ENCODE measurements at regions of chr17 and their contacts with region 1.

Region 1: DNA sequence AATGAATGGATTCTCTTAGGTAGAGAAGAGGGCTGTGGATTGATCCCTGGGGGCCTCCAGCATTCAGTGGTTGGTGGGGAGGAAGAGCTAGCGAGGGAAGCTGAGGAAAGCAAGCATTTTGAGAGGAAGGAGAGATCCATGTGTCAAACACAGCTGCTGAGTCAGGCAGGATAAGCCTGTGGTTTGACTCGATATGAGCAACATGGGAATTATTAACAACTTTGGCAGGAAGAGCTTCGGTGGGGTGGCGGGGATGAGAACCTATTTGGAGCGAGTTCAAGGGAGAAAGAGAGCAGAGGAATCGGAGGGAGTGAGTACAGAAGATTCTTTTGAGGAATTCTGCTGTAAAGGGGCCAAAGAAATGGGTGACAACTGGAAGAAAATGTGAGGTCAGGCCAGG is 59.5 kb upstream of the CDC42EP4 start:
- DNase-seq: no peak
- H3K4me3 ChIP-seq: no peak overlapping the region
- H3K27ac ChIP-seq: no peak overlapping the region
- H3K4me1 ChIP-seq: peaks cover 7% of the 10 kb centered on the region
- H3K27me3 ChIP-seq: no peaks in the 10 kb centered on the region
- CTCF ChIP-seq: no peak
- EP300 ChIP-seq: no peak
- POLR2A ChIP-seq: no peak

Region 2: DNA sequence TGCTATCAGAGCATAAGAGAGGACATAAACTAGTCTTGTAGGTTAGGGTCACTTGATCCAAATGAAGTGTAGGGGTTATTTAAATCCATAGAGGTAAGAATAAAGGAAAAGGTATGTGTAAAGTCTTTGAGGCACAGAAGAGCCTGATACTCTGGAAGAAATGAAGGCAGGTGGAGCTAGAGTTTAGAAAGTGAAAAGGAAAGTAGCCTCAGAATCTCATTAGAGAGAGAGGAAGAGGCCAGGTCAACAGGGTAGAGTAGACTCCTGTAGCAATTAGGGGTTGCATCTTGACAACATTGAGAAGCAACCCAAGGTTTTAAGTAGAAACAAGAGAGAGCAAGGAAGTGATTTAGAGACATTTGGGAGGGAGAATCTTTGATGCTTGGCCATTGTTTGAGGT is 1485.6 kb before region 1 on chr17:
- intact Hi-C with region 1: no loop called
- DNase-seq: no peak
- H3K4me3 ChIP-seq: no peak overlapping the region
- H3K27ac ChIP-seq: no peak overlapping the region
- H3K4me1 ChIP-seq: no peaks in the 10 kb centered on the region
- H3K27me3 ChIP-seq: no peaks in the 10 kb centered on the region
- CTCF ChIP-seq: no peak
- EP300 ChIP-seq: no peak
- POLR2A ChIP-seq: no peak

Region 3: DNA sequence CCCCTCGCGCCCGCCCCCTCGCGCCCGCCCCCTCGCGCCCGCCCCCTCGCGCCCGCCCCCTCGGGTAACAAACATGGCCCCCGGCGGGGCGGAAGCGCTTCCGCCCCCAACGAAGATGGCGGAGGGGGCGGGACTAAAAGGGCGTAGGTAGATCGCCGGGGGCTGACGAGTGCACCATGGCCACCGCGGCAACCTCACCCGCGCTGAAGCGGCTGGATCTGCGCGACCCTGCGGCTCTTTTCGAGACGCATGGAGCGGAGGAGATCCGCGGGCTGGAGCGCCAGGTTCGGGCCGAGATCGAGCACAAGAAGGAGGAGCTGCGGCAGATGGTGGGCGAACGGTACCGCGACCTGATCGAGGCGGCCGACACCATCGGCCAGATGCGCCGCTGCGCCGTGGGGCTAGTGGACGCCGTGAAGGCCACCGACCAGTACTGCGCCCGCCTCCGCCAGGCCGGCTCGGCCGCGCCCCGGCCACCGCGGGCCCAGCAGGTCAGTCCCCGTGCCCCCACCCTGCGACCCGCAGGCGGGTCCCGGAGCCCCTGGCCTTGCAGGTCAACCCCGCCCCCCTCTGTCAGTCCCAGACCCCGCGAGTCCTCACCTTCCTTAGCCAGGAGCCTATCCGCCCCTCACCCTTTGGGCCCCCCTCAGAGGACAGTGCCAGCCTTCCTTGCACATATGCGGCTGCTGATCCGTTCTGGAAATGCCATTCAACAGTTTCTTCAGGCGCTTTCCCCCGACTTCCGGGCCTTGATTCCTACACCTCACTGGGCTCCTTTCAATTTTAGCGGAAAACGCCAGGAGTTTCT is 178.2 kb before region 1 on chr17 and contains the start of gene COG1:
- intact Hi-C with region 1: loop called in 1 of 4 experiments (anchors 5 kb)
- DNase-seq: peak; percentile 79 to 94 (median 87)
- H3K4me3 ChIP-seq: peak within 1 kb of the TSS; percentile 97
- H3K27ac ChIP-seq: peak within 1 kb of the TSS; percentile 62 to 86
- H3K4me1 ChIP-seq: peaks cover 1% of the 10 kb centered on the region
- H3K27me3 ChIP-seq: no peaks in the 10 kb centered on the region
- CTCF ChIP-seq: no peak
- EP300 ChIP-seq: no peak
- POLR2A ChIP-seq: peak; percentile 47
- total RNA-seq, gene COG1: 25.0 to 59.1 (median 48.4) TPM

Region 4: DNA sequence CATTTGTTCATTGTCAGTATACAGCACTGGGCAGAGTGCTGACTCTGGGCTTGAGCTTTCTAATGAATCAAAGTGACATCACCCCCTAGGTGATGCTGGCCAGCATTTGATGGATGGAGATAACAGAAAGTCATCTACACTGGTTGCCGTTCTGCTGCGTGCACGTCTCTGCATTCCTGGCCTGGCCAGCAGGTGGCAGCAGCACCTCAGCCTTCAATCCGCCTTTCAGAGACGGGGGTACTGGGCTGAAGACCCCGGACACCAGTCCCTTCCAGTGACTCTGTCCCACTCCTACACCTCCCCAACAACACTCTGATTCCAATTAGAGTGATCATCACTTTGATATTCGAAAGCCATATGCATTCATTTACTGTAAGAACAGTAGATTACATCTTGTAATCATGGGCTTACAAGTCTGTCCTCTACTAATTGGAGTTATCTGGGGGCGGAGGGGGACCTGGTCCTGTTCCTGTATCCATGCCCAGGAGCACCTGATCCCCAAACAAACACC is 115.6 kb before region 1 on chr17:
- intact Hi-C with region 1: loop called (anchors 2 kb)
- DNase-seq: peak; percentile 37 to 77 (median 64)
- H3K4me3 ChIP-seq: no peak overlapping the region
- H3K27ac ChIP-seq: no peak overlapping the region
- H3K4me1 ChIP-seq: peaks cover 3% of the 10 kb centered on the region
- H3K27me3 ChIP-seq: no peaks in the 10 kb centered on the region
- CTCF ChIP-seq: peak; percentile 93 to 99 (median 97)
- EP300 ChIP-seq: no peak
- POLR2A ChIP-seq: no peak